ENCODE measurements at regions of chr2 and their contacts with region 1.

Region 1: GRCh38 chr2:159895258-159896065 is 97.5 kb upstream of the CD302 start:
- DNase-seq: peak; percentile 66
- H3K4me3 Mint-ChIP-seq: no peak overlapping the region
- H3K27ac Mint-ChIP-seq: peak overlapping the region; percentile 84
- H3K4me1 Mint-ChIP-seq: peaks cover 91% of the 10 kb centered on the region
- H3K27me3 Mint-ChIP-seq: no peaks in the 10 kb centered on the region

Region 2: DNA sequence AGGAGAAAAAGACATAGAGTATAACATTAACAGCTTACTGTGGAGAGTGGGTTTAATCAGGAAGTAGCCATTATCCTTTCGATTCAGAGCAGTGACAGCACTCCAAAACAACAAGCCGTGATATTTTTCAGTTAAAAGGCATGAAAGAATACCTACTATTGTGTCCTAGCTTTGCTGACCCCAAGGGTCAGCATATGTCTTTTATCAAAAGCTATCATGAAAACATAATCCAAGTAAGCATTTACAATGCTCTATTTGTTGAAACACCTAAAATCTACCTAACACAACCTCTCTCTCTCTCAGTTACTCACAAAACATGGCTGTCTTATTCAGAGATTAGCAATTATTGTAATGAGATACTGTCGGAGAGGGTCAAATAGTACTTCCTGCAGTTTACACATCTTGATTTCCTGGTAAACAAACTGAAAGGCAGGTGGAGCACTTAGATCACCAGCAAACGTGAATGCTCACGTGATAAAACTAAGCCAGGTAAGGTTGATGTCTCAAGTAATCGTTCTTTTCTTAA is 379.2 kb before region 1 on chr2:
- CTCF ChIA-PET with region 1: no interaction called
- intact Hi-C with region 1: loop called (anchors 2 kb)
- DNase-seq: peak; percentile 23
- H3K4me3 Mint-ChIP-seq: peak overlapping the region; percentile 66
- H3K27ac Mint-ChIP-seq: peak overlapping the region; percentile 54
- H3K4me1 Mint-ChIP-seq: peaks cover 17% of the 10 kb centered on the region
- H3K27me3 Mint-ChIP-seq: no peaks in the 10 kb centered on the region

Region 3: GRCh38 chr2:159755788-159756187 is 139.7 kb before region 1 on chr2:
- CTCF ChIA-PET with region 1: no interaction called
- intact Hi-C with region 1: loop called (anchors 1 kb)
- DNase-seq: peak; percentile 54
- H3K4me3 Mint-ChIP-seq: no peak overlapping the region
- H3K27ac Mint-ChIP-seq: no peak overlapping the region
- H3K4me1 Mint-ChIP-seq: peaks cover 22% of the 10 kb centered on the region
- H3K27me3 Mint-ChIP-seq: no peaks in the 10 kb centered on the region

Region 4: GRCh38 chr2:159960383-159960782 is 64.9 kb after region 1 on chr2:
- CTCF ChIA-PET with region 1: no interaction called
- intact Hi-C with region 1: loop called (anchors 1 kb)
- DNase-seq: no peak
- H3K4me3 Mint-ChIP-seq: no peak overlapping the region
- H3K27ac Mint-ChIP-seq: no peak overlapping the region
- H3K4me1 Mint-ChIP-seq: peaks cover 18% of the 10 kb centered on the region
- H3K27me3 Mint-ChIP-seq: peaks cover 4% of the 10 kb centered on the region

Region 5: GRCh38 chr2:160042054-160042453 is 146.6 kb after region 1 on chr2:
- CTCF ChIA-PET with region 1: no interaction called
- intact Hi-C with region 1: loop called (anchors 1 kb)
- DNase-seq: peak; percentile 65
- H3K4me3 Mint-ChIP-seq: no peak overlapping the region
- H3K27ac Mint-ChIP-seq: no peak overlapping the region
- H3K4me1 Mint-ChIP-seq: no peaks in the 10 kb centered on the region
- H3K27me3 Mint-ChIP-seq: peaks cover 4% of the 10 kb centered on the region